Activated B cell treated with CpG ODN at 0.5 μM for 24 hours (primary cell): ENCODE measurements at regions of chr17 and their contacts with region 1.

Region 1: DNA sequence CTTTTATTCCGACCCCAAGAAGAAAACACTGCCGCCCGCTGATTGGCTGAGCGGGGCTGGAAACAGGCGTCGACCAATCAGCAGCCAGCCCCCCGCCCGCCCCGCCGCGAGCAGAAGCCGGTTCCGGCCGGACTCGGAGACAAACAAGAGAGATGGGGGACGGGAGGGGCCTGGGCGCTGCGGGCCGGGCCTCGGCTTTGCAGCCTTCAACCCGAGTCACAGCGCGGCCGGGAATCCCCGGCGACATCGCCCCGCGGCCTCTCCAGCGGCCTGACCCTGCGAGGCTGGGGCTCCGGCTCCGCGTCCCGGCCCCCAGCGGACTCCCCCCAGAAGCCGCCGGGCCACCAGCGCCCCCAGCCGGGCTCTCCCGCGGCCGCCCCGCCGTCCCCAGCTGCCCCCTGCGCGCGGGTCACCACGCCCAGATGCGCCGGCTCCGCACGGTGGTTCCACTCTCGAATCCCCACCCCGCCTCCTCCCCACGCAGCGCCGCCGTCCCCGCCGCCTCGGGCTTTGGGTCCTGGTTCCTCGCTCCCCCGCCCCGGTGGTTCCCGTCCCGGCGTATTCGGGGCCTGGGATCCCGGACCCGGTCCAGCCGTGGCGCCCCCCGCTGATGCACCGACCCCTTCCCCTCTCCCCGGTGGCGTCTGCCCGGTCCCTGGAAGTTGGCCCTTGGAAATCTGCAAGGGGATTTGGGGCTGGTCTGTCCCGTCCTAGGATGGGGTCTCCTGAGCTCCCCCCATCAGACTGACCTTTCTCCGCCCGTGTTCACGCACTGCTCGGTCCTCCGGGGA is 417 bp upstream of the SLC43A2 start:
- DNase-seq: peak; percentile 85
- ATAC-seq: peak; percentile 70
- H3K4me3 Mint-ChIP-seq: peak overlapping the region; percentile 99
- H3K27ac Mint-ChIP-seq: peak overlapping the region; percentile 98
- H3K4me1 Mint-ChIP-seq: peaks cover 56% of the 10 kb centered on the region
- H3K27me3 Mint-ChIP-seq: no peaks in the 10 kb centered on the region
- CTCF ChIP-seq: no peak

Region 2: GRCh38 chr17:1365445-1366039 is 263.5 kb before region 1 on chr17:
- CTCF ChIA-PET with region 1: interaction called, 18 read pairs
- POLR2A ChIA-PET with region 1: interaction called, 7 read pairs
- intact Hi-C with region 1: loop called (anchors 1 kb)
- DNase-seq: no peak
- ATAC-seq: peak; percentile 45
- H3K4me3 Mint-ChIP-seq: peak overlapping the region; percentile 24
- H3K27ac Mint-ChIP-seq: peak overlapping the region; percentile 56
- H3K4me1 Mint-ChIP-seq: peaks cover 71% of the 10 kb centered on the region
- H3K27me3 Mint-ChIP-seq: no peaks in the 10 kb centered on the region
- CTCF ChIP-seq: no peak

Region 3: GRCh38 chr17:1488030-1488863 is 140.8 kb before region 1 on chr17:
- CTCF ChIA-PET with region 1: interaction called, 3 read pairs
- POLR2A ChIA-PET with region 1: interaction called, 11 read pairs
- intact Hi-C with region 1: no loop called
- DNase-seq: peak; percentile 85
- ATAC-seq: peak; percentile 19
- H3K4me3 Mint-ChIP-seq: peak overlapping the region; percentile 84
- H3K27ac Mint-ChIP-seq: peak overlapping the region; percentile 83
- H3K4me1 Mint-ChIP-seq: peaks cover 58% of the 10 kb centered on the region
- H3K27me3 Mint-ChIP-seq: no peaks in the 10 kb centered on the region
- CTCF ChIP-seq: no peak

Region 4: DNA sequence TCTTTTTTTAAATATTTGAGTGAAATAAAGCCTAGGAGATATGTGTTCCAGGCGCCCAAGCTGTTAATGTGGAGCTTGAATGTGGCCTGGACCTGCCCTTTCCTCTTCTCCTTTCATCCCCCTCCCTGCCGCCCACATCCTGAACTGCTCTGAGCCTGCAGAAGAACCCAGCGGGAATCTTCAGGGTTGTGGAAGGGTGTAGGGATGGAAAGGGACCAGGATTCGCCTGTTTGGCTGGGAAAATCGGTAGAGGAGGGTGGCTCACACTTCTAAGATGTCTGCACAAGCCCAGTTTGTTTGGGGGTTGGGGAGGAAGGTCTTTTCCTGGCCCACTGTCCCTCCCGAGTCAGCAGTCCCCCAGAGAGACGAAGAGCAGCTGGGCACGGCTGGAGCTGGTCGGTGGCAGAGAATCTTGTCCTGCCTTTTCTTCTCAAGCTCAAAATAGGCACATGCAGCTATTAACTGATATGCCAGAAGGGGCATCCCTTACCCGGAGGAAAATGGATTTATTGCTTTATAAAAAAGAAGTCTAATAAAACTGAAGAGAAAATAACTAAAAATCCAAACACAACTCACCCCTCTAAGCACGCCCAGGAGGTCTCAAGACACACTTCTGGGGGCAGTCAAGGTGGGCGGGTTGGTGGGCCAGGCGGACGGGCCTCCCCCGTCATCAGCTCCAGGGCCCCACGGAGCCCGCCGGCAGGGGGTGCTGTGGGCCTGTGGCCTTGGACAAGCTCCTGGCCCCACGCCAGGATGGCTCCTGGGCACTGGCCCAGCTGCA is 54.9 kb before region 1 on chr17:
- CTCF ChIA-PET with region 1: interaction called, 124 read pairs
- POLR2A ChIA-PET with region 1: interaction called, 418 read pairs
- intact Hi-C with region 1: loop called (anchors 1 kb)
- DNase-seq: peak; percentile 87
- ATAC-seq: peak; percentile 70
- H3K4me3 Mint-ChIP-seq: no peak overlapping the region
- H3K27ac Mint-ChIP-seq: no peak overlapping the region
- H3K4me1 Mint-ChIP-seq: peaks cover 25% of the 10 kb centered on the region
- H3K27me3 Mint-ChIP-seq: no peaks in the 10 kb centered on the region
- CTCF ChIP-seq: no peak

Region 5: GRCh38 chr17:1606352-1607033 is 22.6 kb before region 1 on chr17:
- CTCF ChIA-PET with region 1: interaction called, 5 read pairs
- POLR2A ChIA-PET with region 1: interaction called, 336 read pairs
- intact Hi-C with region 1: loop called (anchors 1 kb)
- DNase-seq: no peak
- ATAC-seq: no peak
- H3K4me3 Mint-ChIP-seq: peak overlapping the region; percentile 67
- H3K27ac Mint-ChIP-seq: peak overlapping the region; percentile 86
- H3K4me1 Mint-ChIP-seq: peaks cover 36% of the 10 kb centered on the region
- H3K27me3 Mint-ChIP-seq: no peaks in the 10 kb centered on the region
- CTCF ChIP-seq: no peak

Region 6: DNA sequence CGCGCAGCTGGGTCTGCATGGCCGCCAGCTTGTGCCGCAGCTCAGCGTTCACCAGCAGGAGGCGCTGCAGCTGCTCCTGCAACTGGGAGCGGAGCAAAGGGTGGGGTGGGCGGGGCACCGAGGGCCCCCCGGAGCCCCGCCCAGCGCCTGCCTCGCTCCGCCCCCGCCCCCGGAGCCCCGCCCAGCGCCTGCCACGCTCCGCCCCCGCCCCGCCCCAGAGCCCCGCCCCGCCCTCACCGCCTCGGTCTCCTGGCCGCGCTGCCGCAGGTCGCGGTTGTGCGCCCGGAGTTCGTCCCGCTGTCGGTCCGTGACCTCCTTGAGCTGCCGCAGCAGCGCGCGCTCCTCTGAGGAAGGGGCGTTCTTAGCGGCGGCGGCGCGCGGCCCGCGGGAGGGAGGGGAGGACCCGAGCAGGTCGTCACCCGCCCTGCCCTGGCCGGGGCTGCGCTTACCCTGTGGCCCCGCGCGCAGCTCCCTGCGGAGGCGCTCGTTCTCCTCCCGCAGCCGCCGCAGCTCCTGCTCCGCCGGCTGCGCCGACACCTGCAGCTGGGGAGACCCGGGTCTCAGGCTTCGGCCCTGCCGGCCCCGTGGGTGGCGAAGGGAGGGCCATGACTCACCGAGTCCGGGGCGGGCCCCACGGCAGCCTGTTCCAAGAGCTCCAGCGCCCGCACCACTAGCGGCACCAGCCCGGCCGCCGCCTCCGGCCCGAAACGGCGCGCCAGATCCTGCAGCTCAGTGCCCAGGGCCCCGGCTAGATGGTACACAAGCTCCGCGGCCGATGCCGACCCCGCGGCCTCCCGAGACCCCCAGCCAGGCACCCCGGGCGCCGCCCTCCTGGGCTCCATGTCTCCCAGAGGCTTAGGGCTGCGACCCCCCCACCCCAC is 20.2 kb after region 1 on chr17:
- CTCF ChIA-PET with region 1: interaction called, 49 read pairs
- POLR2A ChIA-PET with region 1: interaction called, 47 read pairs
- intact Hi-C with region 1: loop called (anchors 1 kb)
- DNase-seq: peak; percentile 93
- ATAC-seq: peak; percentile 69
- H3K4me3 Mint-ChIP-seq: peak overlapping the region; percentile 69
- H3K27ac Mint-ChIP-seq: no peak overlapping the region
- H3K4me1 Mint-ChIP-seq: peaks cover 41% of the 10 kb centered on the region
- H3K27me3 Mint-ChIP-seq: no peaks in the 10 kb centered on the region
- CTCF ChIP-seq: no peak

Region 7: GRCh38 chr17:2401426-2402221 is 772.6 kb after region 1 on chr17:
- CTCF ChIA-PET with region 1: no interaction called
- POLR2A ChIA-PET with region 1: no interaction called
- intact Hi-C with region 1: loop called (anchors 2 kb)
- DNase-seq: peak; percentile 99
- ATAC-seq: peak; percentile 58
- H3K4me3 Mint-ChIP-seq: peak overlapping the region; percentile 94
- H3K27ac Mint-ChIP-seq: peak overlapping the region; percentile 99
- H3K4me1 Mint-ChIP-seq: peaks cover 39% of the 10 kb centered on the region
- H3K27me3 Mint-ChIP-seq: no peaks in the 10 kb centered on the region
- CTCF ChIP-seq: no peak